GM12878 (cell line): ENCODE measurements at regions of chr2 and their contacts with region 1.

Region 1: DNA sequence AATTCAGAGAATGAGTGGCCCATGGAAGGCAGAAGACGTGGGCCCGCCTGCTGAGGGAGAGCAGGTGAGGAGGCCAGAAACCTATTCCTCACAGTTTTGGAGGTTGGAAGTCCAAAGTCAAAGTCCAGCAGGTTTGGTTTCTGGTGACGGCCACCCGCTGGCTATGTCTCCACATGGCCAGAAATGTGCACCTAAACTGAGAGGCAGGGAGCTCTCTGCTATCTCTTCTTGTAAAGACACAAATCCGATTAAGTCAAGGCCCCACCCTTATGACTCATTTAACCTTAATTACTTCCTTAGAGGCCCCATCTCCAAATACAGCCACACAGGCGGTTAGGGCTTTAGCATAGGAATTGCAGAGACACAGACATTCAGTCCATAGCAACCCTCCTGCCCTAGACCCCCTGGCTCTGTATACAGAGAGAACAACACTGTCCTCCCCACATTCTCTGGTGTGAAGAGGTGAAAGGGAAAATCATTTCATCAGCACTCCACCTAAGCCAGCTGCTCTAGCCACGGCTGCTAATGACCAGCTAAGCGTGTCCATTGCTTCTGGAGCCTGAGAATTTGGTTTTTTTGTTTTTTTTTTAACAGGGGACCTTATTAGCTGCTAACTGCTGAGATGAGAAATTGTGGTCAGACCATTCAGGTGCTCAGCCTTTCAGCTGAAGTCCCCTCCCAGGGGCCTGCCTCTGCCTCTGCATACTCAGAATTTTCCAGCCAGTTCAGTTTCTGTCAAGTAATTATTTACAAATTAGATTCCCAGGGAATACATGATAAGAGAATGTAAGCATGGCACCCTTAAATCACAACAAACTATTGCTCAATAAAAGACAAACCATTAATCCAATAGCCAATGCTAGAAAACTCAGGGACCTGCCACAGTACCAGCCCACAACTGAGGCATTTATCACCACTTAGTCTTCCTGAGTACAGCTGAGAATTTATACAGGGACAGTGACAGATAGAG is 368.7 kb upstream of the ID2 start:
- DNase-seq: peak; percentile 96
- ATAC-seq: peak; percentile 81
- H3K4me3 ChIP-seq: no peak overlapping the region; the same call in 1 of the 2 replicates
- H3K27ac ChIP-seq: peak overlapping the region; percentile 72
- H3K4me1 ChIP-seq: peaks cover 53% of the 10 kb centered on the region
- H3K27me3 ChIP-seq: no peaks in the 10 kb centered on the region
- CTCF ChIP-seq: no peak
- EP300 ChIP-seq: peak; percentile 46 to 86; a peak in 3 of 4 replicates
- POLR2A ChIP-seq: no peak
- RAD21 ChIP-seq: peak; percentile 29

Region 2: DNA sequence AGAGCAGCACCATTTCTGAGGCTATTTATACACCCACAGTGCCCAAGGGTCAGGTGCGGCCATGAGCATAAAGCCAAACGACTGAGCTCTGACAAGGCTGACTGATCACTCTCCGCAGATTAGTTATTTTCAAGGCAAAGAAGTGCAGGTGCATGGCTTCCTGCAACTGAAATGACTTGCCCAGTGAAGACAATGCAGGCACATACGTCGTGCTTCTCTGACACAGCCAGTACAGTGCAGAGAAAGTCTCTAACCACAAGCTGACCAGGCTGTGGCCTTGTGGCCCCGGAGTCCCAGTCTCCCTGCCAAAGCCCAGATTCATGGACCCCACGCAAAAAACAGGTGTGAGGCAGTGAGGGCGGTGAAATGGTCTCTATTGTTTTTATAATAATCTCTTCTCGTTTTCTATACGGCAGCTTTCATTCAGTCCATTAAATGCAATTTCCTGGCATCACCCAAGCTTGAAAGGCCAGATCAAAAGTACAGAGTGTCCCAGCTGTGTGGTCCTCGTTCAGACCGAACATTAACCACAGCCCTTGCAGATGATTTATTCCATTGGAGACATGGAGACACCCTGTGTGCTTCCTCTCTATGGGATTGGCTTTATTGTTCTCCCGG is 78.3 kb before region 1 on chr2:
- CTCF ChIA-PET with region 1: interaction called, 6 read pairs
- POLR2A ChIA-PET with region 1: interaction called, 3 read pairs
- RAD21 ChIA-PET with region 1: interaction called, 23 read pairs
- SMC1A ChIA-PET with region 1: interaction called, 13 read pairs
- in situ Hi-C with region 1: no loop called
- intact Hi-C with region 1: loop called (anchors 1 kb)
- DNase-seq: peak; percentile 90
- ATAC-seq: peak; percentile 88
- H3K4me3 ChIP-seq: peak overlapping the region; percentile 26; the same call in 1 of the 2 replicates
- H3K27ac ChIP-seq: peak overlapping the region; percentile 41
- H3K4me1 ChIP-seq: peaks cover 39% of the 10 kb centered on the region
- H3K27me3 ChIP-seq: no peaks in the 10 kb centered on the region
- CTCF ChIP-seq: no peak
- EP300 ChIP-seq: peak; percentile 78 to 84
- POLR2A ChIP-seq: no peak
- RAD21 ChIP-seq: no peak

Region 3: GRCh38 chr2:8324164-8324856 is 11.2 kb after region 1 on chr2:
- CTCF ChIA-PET with region 1: interaction called, 11 read pairs
- POLR2A ChIA-PET with region 1: interaction called, 3 read pairs
- RAD21 ChIA-PET with region 1: interaction called, 8 read pairs
- SMC1A ChIA-PET with region 1: interaction called, 49 read pairs
- in situ Hi-C with region 1: no loop called
- intact Hi-C with region 1: no loop called
- DNase-seq: no peak
- ATAC-seq: no peak; the same call in 2 of the 3 replicates
- H3K4me3 ChIP-seq: no peak overlapping the region
- H3K27ac ChIP-seq: no peak overlapping the region
- H3K4me1 ChIP-seq: no peaks in the 10 kb centered on the region
- H3K27me3 ChIP-seq: no peaks in the 10 kb centered on the region
- CTCF ChIP-seq: no peak
- EP300 ChIP-seq: no peak
- POLR2A ChIP-seq: no peak
- RAD21 ChIP-seq: no peak

Region 4: DNA sequence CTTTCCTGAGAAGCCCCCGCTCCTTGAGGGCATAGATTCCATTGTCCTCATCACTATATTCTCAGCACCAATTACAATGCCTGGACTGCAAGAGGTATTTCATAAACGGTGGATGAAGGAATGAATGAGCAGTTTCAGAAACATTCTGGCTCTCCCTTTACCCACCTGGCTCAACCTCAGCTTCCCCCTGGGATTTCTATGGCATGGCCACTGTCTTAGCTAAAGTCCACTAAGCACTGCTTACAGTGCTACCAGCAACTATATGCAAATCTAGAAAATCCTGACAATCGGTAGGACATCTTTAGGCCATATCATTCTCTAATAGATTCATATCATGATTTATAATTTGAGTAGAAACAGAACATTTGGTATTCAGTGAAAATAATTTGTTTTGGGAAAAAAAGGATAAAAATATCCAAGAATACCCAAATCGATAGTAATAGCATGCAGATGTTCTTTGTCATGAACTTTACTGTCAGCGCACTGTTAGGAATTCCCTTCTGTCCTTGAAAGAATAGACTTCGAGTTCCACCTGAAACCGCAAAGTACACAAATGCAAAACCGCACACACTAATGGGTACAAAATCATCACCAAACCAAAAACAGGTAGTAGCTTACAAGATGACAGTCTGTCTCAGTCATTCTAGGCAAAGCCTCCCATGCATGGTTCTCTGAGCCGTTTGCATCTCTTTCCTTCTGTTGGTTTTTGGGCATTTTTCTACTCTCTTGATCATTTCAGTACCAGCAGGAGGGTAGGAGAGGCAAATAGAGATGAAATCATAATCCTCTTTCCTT is 65.1 kb after region 1 on chr2:
- CTCF ChIA-PET with region 1: interaction called, 5 read pairs
- POLR2A ChIA-PET with region 1: interaction called, 10 read pairs
- RAD21 ChIA-PET with region 1: interaction called, 4 read pairs
- SMC1A ChIA-PET with region 1: interaction called, 10 read pairs
- in situ Hi-C with region 1: no loop called
- intact Hi-C with region 1: loop called (anchors 2 kb)
- DNase-seq: peak; percentile 63
- ATAC-seq: peak; percentile 88
- H3K4me3 ChIP-seq: no peak overlapping the region
- H3K27ac ChIP-seq: no peak overlapping the region
- H3K4me1 ChIP-seq: peaks cover 33% of the 10 kb centered on the region
- H3K27me3 ChIP-seq: no peaks in the 10 kb centered on the region
- CTCF ChIP-seq: no peak
- EP300 ChIP-seq: peak in 1 of 2 experiments; percentile 42; a peak in 2 of 4 replicates
- POLR2A ChIP-seq: no peak
- RAD21 ChIP-seq: 0 out of 2 replicates have a peak, but pooled peaks have one; percentile 4

Region 5: DNA sequence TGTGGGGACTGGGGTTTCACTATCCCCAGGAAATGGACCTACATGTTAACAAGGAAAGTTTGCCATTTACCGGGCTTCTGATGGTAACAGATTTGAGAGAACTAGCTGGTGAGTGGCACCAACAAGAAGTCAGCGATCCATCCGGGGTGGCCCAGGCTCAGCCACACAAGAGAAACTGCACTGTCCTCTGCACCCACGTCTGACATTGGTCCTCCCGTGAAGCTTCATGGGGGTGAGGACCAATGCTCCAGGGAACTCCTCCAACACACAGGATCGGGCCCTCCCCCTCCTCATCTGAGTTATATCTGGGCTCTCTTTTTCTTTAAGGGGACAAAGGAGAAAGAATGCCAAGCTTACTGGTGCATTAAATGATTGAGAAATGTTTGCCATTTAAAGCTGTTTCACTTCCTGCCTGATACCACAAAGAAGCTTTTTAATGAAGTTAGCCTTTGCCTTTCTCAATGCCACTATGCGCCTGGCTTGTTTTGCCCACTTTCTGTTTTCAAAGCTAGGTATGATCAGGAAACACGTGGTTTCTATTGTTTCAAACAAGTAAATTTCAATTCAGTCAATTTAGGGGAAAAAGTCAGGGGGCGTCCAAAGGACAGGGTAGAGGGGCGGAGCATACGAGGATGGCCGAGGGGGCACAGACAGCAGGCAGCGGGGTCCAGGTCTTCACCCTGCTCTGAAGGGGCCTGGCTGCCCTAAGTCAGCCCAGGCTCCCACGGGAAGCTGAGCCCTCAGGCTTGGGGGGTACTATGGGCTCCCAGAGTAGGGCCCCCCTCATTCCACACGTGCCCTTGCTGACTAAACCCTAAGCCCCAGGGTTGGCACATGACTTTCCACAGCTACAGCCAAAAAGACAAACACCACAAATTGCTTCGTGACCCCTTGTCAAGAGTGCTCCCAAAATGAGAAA is 164.7 kb after region 1 on chr2:
- CTCF ChIA-PET with region 1: interaction called, 12 read pairs
- POLR2A ChIA-PET with region 1: interaction called, 4 read pairs
- RAD21 ChIA-PET with region 1: interaction called, 25 read pairs
- SMC1A ChIA-PET with region 1: interaction called, 21 read pairs
- in situ Hi-C with region 1: no loop called
- intact Hi-C with region 1: no loop called
- DNase-seq: peak; percentile 95
- ATAC-seq: peak; percentile 52
- H3K4me3 ChIP-seq: peak overlapping the region; percentile 43; the same call in 1 of the 2 replicates
- H3K27ac ChIP-seq: peak overlapping the region; percentile 62
- H3K4me1 ChIP-seq: peaks cover 68% of the 10 kb centered on the region
- H3K27me3 ChIP-seq: no peaks in the 10 kb centered on the region
- CTCF ChIP-seq: no peak
- EP300 ChIP-seq: peak; percentile 94 to 96
- POLR2A ChIP-seq: no peak
- RAD21 ChIP-seq: no peak

Region 6: DNA sequence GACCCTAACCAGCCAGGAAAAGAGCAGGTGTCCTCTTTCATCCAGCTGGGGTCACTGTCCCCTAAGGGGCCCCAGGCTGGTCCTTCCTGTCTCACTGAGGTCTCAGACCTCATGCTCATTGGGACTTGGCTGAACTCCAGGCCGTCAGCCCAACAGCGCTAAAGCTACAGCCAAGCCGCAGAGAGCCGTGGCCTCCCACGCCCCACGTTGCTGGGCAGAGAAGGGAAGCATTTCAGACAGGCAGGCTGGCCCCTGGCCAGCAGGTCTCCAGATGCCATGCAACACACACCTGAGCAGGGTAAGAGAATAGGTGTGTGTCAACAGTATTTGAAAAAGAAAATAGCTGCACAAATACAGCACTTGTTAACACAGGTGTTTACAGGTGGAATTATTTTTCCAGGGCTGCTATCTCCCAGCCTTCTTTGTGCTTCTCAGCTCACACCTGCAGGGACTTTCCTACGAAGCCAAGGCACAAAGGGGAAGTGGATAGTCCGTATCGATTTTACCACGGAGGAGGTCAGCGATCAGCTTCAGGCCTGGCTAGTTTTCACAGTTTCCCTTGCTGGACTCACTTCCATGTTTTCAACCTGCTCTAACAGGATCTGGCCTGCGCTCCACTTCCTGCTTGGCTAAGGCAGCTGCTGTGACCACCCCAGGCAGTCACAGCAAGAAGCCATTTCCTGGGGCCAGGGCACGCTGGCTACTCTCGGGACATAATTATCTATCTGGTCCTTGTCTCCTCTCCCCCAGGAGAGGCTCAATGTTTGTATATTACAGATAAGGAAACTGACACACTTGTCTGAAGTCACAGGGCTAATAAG is 212.6 kb after region 1 on chr2:
- CTCF ChIA-PET with region 1: no interaction called
- POLR2A ChIA-PET with region 1: interaction called, 3 read pairs
- RAD21 ChIA-PET with region 1: interaction called, 12 read pairs
- SMC1A ChIA-PET with region 1: interaction called, 9 read pairs
- in situ Hi-C with region 1: no loop called
- intact Hi-C with region 1: no loop called
- DNase-seq: peak; percentile 90
- ATAC-seq: peak; percentile 82
- H3K4me3 ChIP-seq: 0 out of 2 replicates have a peak overlapping the region, but pooled peaks have one; percentile 9
- H3K27ac ChIP-seq: peak overlapping the region; percentile 74
- H3K4me1 ChIP-seq: peaks cover 64% of the 10 kb centered on the region
- H3K27me3 ChIP-seq: no peaks in the 10 kb centered on the region
- CTCF ChIP-seq: peak; percentile 54 to 72 (median 58)
- EP300 ChIP-seq: peak in 1 of 2 experiments; percentile 80; a peak in 3 of 4 replicates
- POLR2A ChIP-seq: no peak
- RAD21 ChIP-seq: peak; percentile 88